HEK293 (cell line): ENCODE measurements at regions of chr5 and their contacts with region 1.

Region 1: GRCh38 chr5:15003511-15003920 is 131.9 kb upstream of the ANKH start:
- H3K4me3 ChIP-seq: no peak overlapping the region
- H3K27ac ChIP-seq: no peak overlapping the region
- H3K4me1 ChIP-seq: peaks cover 6% of the 10 kb centered on the region
- CTCF ChIP-seq: peak; percentile 50; the same call in 1 of the 2 replicates

Region 2: GRCh38 chr5:14685757-14686156 is 317.8 kb before region 1 on chr5:
- CTCF ChIA-PET with region 1: interaction called, 17 read pairs
- POLR2A ChIA-PET with region 1: no interaction called
- H3K4me3 ChIP-seq: no peak overlapping the region
- H3K27ac ChIP-seq: no peak overlapping the region
- H3K4me1 ChIP-seq: no peaks in the 10 kb centered on the region
- CTCF ChIP-seq: peak; percentile 49; the same call in 1 of the 2 replicates

Region 3: GRCh38 chr5:14720236-14720971 is 283.1 kb before region 1 on chr5:
- CTCF ChIA-PET with region 1: interaction called, 134 read pairs
- POLR2A ChIA-PET with region 1: no interaction called
- H3K4me3 ChIP-seq: no peak overlapping the region
- H3K27ac ChIP-seq: no peak overlapping the region
- H3K4me1 ChIP-seq: no peaks in the 10 kb centered on the region
- CTCF ChIP-seq: no peak

Region 4: GRCh38 chr5:14727428-14727865 is 276.1 kb before region 1 on chr5:
- CTCF ChIA-PET with region 1: interaction called, 134 read pairs
- POLR2A ChIA-PET with region 1: interaction called, 3 read pairs
- H3K4me3 ChIP-seq: no peak overlapping the region
- H3K27ac ChIP-seq: no peak overlapping the region
- H3K4me1 ChIP-seq: no peaks in the 10 kb centered on the region
- CTCF ChIP-seq: peak; percentile 85

Region 5: GRCh38 chr5:14946815-14947640 is 56.5 kb before region 1 on chr5:
- CTCF ChIA-PET with region 1: interaction called, 11 read pairs
- POLR2A ChIA-PET with region 1: no interaction called
- H3K4me3 ChIP-seq: no peak overlapping the region
- H3K27ac ChIP-seq: no peak overlapping the region
- H3K4me1 ChIP-seq: no peaks in the 10 kb centered on the region
- CTCF ChIP-seq: peak; percentile 39; the same call in 1 of the 2 replicates

Region 6: GRCh38 chr5:14983666-14984441 is 19.7 kb before region 1 on chr5:
- CTCF ChIA-PET with region 1: interaction called, 11 read pairs
- POLR2A ChIA-PET with region 1: no interaction called
- H3K4me3 ChIP-seq: no peak overlapping the region
- H3K27ac ChIP-seq: no peak overlapping the region
- H3K4me1 ChIP-seq: no peaks in the 10 kb centered on the region
- CTCF ChIP-seq: no peak

Region 7: GRCh38 chr5:15013654-15014463 is 10.3 kb after region 1 on chr5:
- CTCF ChIA-PET with region 1: interaction called, 17 read pairs
- POLR2A ChIA-PET with region 1: no interaction called
- H3K4me3 ChIP-seq: no peak overlapping the region
- H3K27ac ChIP-seq: no peak overlapping the region
- H3K4me1 ChIP-seq: peaks cover 14% of the 10 kb centered on the region
- CTCF ChIP-seq: no peak

Region 8: DNA sequence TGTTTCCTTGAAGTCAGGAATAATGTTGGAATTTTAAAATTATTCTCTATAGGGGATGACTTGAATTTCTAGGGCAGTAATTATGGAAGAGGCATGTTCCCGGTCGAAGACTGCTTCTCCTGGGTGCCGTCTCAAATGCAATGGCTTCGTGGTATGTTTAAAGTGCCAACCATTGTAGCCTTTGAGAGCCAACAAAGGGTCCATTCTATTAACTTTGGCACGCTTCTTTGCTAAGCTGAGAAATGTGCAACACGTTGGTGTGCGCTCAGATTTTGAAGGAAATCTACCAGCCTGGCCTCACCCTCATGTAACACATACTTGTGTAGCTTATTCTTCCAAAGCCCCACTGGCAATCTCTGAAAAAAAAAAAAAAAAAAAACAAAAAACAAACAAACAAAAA is 89.3 kb after region 1 on chr5:
- CTCF ChIA-PET with region 1: no interaction called
- POLR2A ChIA-PET with region 1: no interaction called
- H3K4me3 ChIP-seq: no peak overlapping the region
- H3K27ac ChIP-seq: no peak overlapping the region
- H3K4me1 ChIP-seq: no peaks in the 10 kb centered on the region
- CTCF ChIP-seq: no peak